ENCODE measurements at regions of chr1 and their contacts with region 1.

Region 1: DNA sequence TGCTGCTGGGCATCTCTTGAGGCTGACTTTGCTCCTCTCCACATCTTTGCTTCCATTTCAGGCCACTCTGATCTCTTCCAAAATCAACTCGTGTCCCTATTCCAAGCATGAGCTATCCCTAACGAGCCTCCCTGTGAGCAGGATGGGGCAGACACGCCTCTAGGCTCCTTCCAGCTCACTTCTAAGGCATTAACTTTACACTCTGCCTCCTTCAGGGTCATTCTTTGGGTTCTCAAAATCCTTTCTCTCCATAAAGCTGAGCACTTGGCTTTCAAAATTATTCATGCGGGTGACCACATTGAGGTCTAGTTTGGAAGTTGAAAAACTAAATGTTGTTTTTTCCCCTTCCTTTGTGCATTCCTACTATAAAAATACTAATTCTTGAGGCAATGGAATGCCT is 33.4 kb upstream of the BMP8B start:
- DNase-seq: no peak
- ATAC-seq: no peak
- H3K4me3 ChIP-seq: no peak overlapping the region
- H3K27ac ChIP-seq: no peak overlapping the region
- H3K4me1 ChIP-seq: peaks cover 0 to 10% (median 0%) of the 10 kb centered on the region in 4 donors
- H3K27me3 ChIP-seq: no peaks in the 10 kb centered on the region
- CTCF ChIP-seq: no peak
- POLR2A ChIP-seq: no peak

Region 2: DNA sequence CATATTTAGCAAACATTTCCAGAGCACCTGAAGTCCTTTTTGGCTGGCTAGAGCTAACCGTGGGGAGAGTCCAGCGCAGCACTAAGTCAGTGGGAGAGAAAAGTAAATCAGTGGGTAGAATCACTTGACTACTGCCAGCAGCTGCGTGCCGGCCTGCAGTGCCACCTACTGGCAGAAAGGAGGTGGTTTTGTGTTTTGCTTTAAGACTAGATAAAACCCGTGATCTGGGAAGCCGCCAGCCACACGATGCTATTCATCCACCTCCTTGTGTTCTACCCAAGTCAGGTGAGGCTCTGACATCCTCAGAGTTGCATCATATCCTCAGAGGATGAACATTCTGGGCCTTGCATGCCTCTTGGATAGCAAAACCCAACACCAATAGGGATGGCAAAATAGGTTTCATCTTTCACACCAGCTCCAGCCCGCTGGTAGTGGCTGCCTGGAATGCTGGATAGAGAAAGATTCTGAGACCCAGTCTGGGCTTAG is 168.5 kb before region 1 on chr1:
- intact Hi-C with region 1: no loop called
- DNase-seq: peak in 2 of 3 donors; percentile 72 to 74
- ATAC-seq: peak; percentile 83 to 92 (median 89)
- H3K4me3 ChIP-seq: no peak overlapping the region
- H3K27ac ChIP-seq: no peak overlapping the region
- H3K4me1 ChIP-seq: no peaks in the 10 kb centered on the region
- H3K27me3 ChIP-seq: no peaks in the 10 kb centered on the region
- CTCF ChIP-seq: peak; percentile 74 to 94 (median 90)
- POLR2A ChIP-seq: no peak

Region 3: DNA sequence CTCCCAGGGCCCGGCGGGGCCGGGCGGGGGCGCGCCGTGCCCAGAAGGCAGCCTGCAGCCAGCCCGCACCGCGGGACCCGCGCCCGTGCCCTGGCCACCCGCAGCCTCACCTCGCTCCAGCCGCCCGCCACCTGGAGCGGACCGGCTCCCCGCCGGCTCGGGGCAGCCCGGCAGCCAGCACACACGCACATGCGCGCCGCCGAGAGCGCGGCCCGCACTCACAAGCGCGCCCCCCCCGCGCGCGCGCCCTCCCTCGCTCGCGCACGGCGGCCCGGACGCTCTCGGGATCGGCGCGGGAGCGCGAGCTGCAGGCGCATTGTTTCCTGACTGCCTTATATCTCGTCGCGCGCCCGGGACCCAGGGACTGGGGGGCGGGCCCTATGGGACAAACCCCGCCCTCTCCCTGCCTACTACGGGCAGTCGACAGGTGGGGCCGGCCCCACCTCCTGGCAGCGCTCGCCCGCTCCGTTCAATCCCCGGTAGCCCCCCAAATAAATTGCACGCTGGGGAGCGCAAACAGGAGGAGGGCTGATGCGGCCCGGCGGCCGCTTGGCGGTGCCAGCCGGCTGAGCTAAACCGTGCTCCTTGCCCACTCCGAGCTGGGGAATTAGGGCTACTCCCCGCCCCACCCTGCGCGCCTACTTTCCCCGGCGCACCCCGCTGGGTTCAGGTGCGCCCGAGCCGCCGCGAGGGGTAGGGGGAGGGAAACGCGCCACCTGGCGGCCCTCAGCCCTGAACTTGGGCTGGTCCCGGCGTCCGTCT is 79.8 kb after region 1 on chr1 and contains the start of gene MYCL:
- intact Hi-C with region 1: loop called (anchors 5 kb)
- DNase-seq: peak; percentile 88 to 94 (median 93)
- ATAC-seq: peak; percentile 81 to 90 (median 84)
- H3K4me3 ChIP-seq: peak within 1 kb of the TSS; percentile 70 to 75 (median 70)
- H3K27ac ChIP-seq: peak within 1 kb of the TSS; percentile 51 to 89 (median 72)
- H3K4me1 ChIP-seq: peaks cover 0 to 20% (median 7%) of the 10 kb centered on the region in 4 donors
- H3K27me3 ChIP-seq: no peaks in the 10 kb centered on the region
- CTCF ChIP-seq: peak; percentile 74 to 91 (median 81)
- POLR2A ChIP-seq: peak; percentile 85
- total RNA-seq, gene MYCL: 0.75 to 20.5 (median 6.1) TPM

Measured in right lobe of liver (tissue), 6 donors.